A673 (cell line): ENCODE measurements at regions of chr13 and their contacts with region 1.

Region 1: GRCh38 chr13:32624441-32624840 is 38.2 kb downstream of the PDS5B start:
- DNase-seq: no peak
- H3K4me3 ChIP-seq: no peak overlapping the region
- H3K27ac ChIP-seq: no peak overlapping the region
- H3K4me1 ChIP-seq: peaks cover 4% of the 10 kb centered on the region
- H3K27me3 ChIP-seq: no peaks in the 10 kb centered on the region
- CTCF ChIP-seq: no peak

Region 2: DNA sequence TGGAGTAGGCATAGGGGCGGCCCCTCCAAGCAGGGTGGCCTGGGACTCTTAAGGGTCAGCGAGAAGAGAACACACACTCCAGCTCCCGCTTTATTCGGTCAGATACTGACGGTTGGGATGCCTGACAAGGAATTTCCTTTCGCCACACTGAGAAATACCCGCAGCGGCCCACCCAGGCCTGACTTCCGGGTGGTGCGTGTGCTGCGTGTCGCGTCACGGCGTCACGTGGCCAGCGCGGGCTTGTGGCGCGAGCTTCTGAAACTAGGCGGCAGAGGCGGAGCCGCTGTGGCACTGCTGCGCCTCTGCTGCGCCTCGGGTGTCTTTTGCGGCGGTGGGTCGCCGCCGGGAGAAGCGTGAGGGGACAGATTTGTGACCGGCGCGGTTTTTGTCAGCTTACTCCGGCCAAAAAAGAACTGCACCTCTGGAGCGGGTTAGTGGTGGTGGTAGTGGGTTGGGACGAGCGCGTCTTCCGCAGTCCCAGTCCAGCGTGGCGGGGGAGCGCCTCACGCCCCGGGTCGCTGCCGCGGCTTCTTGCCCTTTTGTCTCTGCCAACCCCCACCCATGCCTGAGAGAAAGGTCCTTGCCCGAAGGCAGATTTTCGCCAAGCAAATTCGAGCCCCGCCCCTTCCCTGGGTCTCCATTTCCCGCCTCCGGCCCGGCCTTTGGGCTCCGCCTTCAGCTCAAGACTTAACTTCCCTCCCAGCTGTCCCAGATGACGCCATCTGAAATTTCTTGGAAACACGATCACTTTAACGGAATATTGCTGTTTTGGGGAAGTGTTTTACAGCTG is 309.0 kb before region 1 on chr13 and contains the starts of genes BRCA2 and ZAR1L:
- CTCF ChIA-PET with region 1: no interaction called
- POLR2A ChIA-PET with region 1: no interaction called
- intact Hi-C with region 1: no loop called
- DNase-seq: peak; percentile 94
- H3K4me3 ChIP-seq: peak within 1 kb of the TSS; percentile 66
- H3K27ac ChIP-seq: peak within 1 kb of the TSS; percentile 97
- H3K4me1 ChIP-seq: peaks cover 7% of the 10 kb centered on the region
- H3K27me3 ChIP-seq: no peaks in the 10 kb centered on the region
- CTCF ChIP-seq: no peak
- total RNA-seq, gene BRCA2: 35.9 and 47.2 TPM in 2 replicates
- total RNA-seq, gene ZAR1L: not detected in 2 replicates

Region 3: GRCh38 chr13:32553720-32554119 is 70.7 kb before region 1 on chr13:
- CTCF ChIA-PET with region 1: no interaction called
- POLR2A ChIA-PET with region 1: no interaction called
- intact Hi-C with region 1: no loop called
- DNase-seq: no peak
- H3K4me3 ChIP-seq: no peak overlapping the region
- H3K27ac ChIP-seq: no peak overlapping the region
- H3K4me1 ChIP-seq: no peaks in the 10 kb centered on the region
- H3K27me3 ChIP-seq: no peaks in the 10 kb centered on the region
- CTCF ChIP-seq: no peak

Region 4: GRCh38 chr13:32594157-32594738 is 30.2 kb before region 1 on chr13:
- CTCF ChIA-PET with region 1: no interaction called
- POLR2A ChIA-PET with region 1: no interaction called
- intact Hi-C with region 1: loop called (anchors 1 kb)
- DNase-seq: peak; percentile 24
- H3K4me3 ChIP-seq: no peak overlapping the region
- H3K27ac ChIP-seq: no peak overlapping the region
- H3K4me1 ChIP-seq: peaks cover 21% of the 10 kb centered on the region
- H3K27me3 ChIP-seq: no peaks in the 10 kb centered on the region
- CTCF ChIP-seq: no peak

Region 5: GRCh38 chr13:34546344-34547250 is 1922.2 kb after region 1 on chr13:
- CTCF ChIA-PET with region 1: no interaction called
- POLR2A ChIA-PET with region 1: no interaction called
- intact Hi-C with region 1: no loop called
- DNase-seq: no peak
- H3K4me3 ChIP-seq: no peak overlapping the region
- H3K27ac ChIP-seq: no peak overlapping the region
- H3K4me1 ChIP-seq: no peaks in the 10 kb centered on the region
- H3K27me3 ChIP-seq: no peaks in the 10 kb centered on the region
- CTCF ChIP-seq: no peak